Activated naive CD8-positive, alpha-beta T cell treated with anti-CD3 and anti-CD28 coated beads, Interleukin-2, amount 10 ng/mL, durations not matched to agents 7 days and 5 days (primary cell): ENCODE measurements at regions of chr7 and their contacts with region 1.

Region 1: DNA sequence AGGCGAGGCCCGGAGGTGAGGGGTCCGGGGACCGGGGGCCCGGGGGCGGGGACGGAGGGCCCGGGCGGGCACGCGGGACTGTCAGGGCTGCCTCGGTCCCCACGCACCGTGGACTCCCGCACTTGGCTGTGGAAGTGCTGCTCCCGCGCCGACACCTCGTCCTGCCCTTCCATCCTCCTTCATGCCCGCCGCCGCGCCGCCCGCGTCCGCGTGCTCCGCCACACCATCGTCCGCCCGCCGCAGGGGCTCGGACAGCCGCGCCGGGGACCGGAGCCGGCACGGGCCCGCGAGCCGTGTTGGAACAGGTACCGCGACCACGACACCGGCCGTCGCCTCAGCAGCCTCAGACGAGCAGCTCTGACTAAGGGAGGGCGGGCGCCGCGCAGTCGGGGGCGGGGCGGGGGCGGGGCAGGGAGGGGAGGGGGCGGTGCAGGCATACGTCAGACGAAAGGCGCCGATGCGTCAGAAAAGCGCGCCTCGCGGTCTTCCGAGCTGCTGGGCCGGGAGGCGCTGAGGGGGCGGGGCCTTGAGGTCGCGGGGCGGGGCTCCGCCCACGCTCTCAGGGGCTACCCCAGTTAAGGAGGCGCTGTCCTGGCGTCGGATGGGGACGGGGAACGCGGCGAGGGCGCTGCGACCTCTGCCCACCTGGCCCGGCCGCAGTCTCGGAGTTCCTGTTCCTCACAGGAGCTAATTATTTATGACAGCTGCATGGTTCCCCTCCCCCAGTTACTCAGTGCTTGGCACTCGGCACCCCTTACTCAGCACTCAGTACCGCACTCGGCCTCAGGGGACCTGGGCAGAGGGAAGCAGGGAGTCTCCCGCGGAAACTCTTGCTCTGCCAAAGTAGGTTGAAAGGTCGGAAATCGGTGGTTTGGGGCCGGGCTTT is at the start of gene LMBR1:
- DNase-seq: peak; percentile 96
- ATAC-seq: peak; percentile 83
- H3K4me3 Mint-ChIP-seq: peak within 1 kb of the TSS; percentile 93
- H3K27ac Mint-ChIP-seq: peak within 1 kb of the TSS; percentile 93
- H3K4me1 Mint-ChIP-seq: peaks cover 38% of the 10 kb centered on the region
- H3K27me3 Mint-ChIP-seq: no peaks in the 10 kb centered on the region
- total RNA-seq, gene LMBR1: 73.2 to 73.6 TPM

Region 2: GRCh38 chr7:156949541-156950380 is 56.7 kb after region 1 on chr7 and contains the start of gene NOM1:
- POLR2A ChIA-PET with region 1: interaction called, 28 read pairs
- DNase-seq: peak; percentile 97
- ATAC-seq: peak; percentile 92
- H3K4me3 Mint-ChIP-seq: peak within 1 kb of the TSS; percentile 87
- H3K27ac Mint-ChIP-seq: peak within 1 kb of the TSS; percentile 82
- H3K4me1 Mint-ChIP-seq: peaks cover 24% of the 10 kb centered on the region
- H3K27me3 Mint-ChIP-seq: peaks cover 14% of the 10 kb centered on the region
- total RNA-seq, gene NOM1: 27.2 to 29.8 TPM

Region 3: GRCh38 chr7:157061979-157062378 is 168.9 kb after region 1 on chr7:
- POLR2A ChIA-PET with region 1: no interaction called
- DNase-seq: no peak
- ATAC-seq: no peak
- H3K4me3 Mint-ChIP-seq: no peak overlapping the region
- H3K27ac Mint-ChIP-seq: no peak overlapping the region
- H3K4me1 Mint-ChIP-seq: peaks cover 5% of the 10 kb centered on the region
- H3K27me3 Mint-ChIP-seq: peaks cover 9% of the 10 kb centered on the region

Region 4: GRCh38 chr7:157138424-157139110 is 245.5 kb after region 1 on chr7 and contains the start of gene UBE3C:
- POLR2A ChIA-PET with region 1: interaction called, 10 read pairs
- DNase-seq: peak; percentile 97
- ATAC-seq: peak; percentile 80
- H3K4me3 Mint-ChIP-seq: peak within 1 kb of the TSS; percentile 88
- H3K27ac Mint-ChIP-seq: peak within 1 kb of the TSS; percentile 97
- H3K4me1 Mint-ChIP-seq: peaks cover 28% of the 10 kb centered on the region
- H3K27me3 Mint-ChIP-seq: peaks cover 5% of the 10 kb centered on the region
- total RNA-seq, gene UBE3C: 51.7 to 52.1 TPM